CD4-positive, alpha-beta T cell (primary cell): ENCODE measurements at regions of chr3 and their contacts with region 1.

Region 1: GRCh38 chr3:16828815-16829214 is 55.9 kb upstream of the PLCL2 start:
- DNase-seq: peak; percentile 30 to 85 (median 46)
- ATAC-seq: peak; percentile 76
- H3K4me3 ChIP-seq: no peak overlapping the region
- H3K4me3 Mint-ChIP-seq: no peak overlapping the region
- H3K27ac ChIP-seq: no peak overlapping the region
- H3K27ac Mint-ChIP-seq: no peak overlapping the region
- H3K4me1 ChIP-seq: peaks cover 13% of the 10 kb centered on the region
- H3K4me1 Mint-ChIP-seq: peaks cover 28% of the 10 kb centered on the region
- H3K27me3 ChIP-seq: no peaks in the 10 kb centered on the region
- H3K27me3 Mint-ChIP-seq: no peaks in the 10 kb centered on the region
- CTCF ChIP-seq: peak; percentile 58

Region 2: GRCh38 chr3:16600780-16601539 is 227.9 kb before region 1 on chr3:
- CTCF ChIA-PET with region 1: no interaction called
- POLR2A ChIA-PET with region 1: no interaction called
- intact Hi-C with region 1: loop called in 1 of 2 experiments (anchors 10 kb)
- DNase-seq: peak; percentile 69 to 92 (median 81)
- ATAC-seq: peak; percentile 39
- H3K4me3 ChIP-seq: no peak overlapping the region
- H3K4me3 Mint-ChIP-seq: no peak overlapping the region
- H3K27ac ChIP-seq: no peak overlapping the region
- H3K27ac Mint-ChIP-seq: no peak overlapping the region
- H3K4me1 ChIP-seq: no peaks in the 10 kb centered on the region
- H3K4me1 Mint-ChIP-seq: peaks cover 17% of the 10 kb centered on the region
- H3K27me3 ChIP-seq: no peaks in the 10 kb centered on the region
- H3K27me3 Mint-ChIP-seq: no peaks in the 10 kb centered on the region
- CTCF ChIP-seq: peak; percentile 96

Region 3: GRCh38 chr3:16842272-16843270 is 13.8 kb after region 1 on chr3:
- CTCF ChIA-PET with region 1: interaction called, 6 read pairs
- POLR2A ChIA-PET with region 1: interaction called, 30 read pairs
- intact Hi-C with region 1: no loop called
- DNase-seq: peak; percentile 56 to 92 (median 71)
- ATAC-seq: peak; percentile 87
- H3K4me3 ChIP-seq: peak overlapping the region; percentile 50
- H3K4me3 Mint-ChIP-seq: peak overlapping the region; percentile 88
- H3K27ac ChIP-seq: peak overlapping the region; percentile 68 to 92
- H3K27ac Mint-ChIP-seq: peak overlapping the region; percentile 97
- H3K4me1 ChIP-seq: peaks cover 61% of the 10 kb centered on the region
- H3K4me1 Mint-ChIP-seq: peaks cover 89% of the 10 kb centered on the region
- H3K27me3 ChIP-seq: no peaks in the 10 kb centered on the region
- H3K27me3 Mint-ChIP-seq: no peaks in the 10 kb centered on the region
- CTCF ChIP-seq: no peak

Region 4: DNA sequence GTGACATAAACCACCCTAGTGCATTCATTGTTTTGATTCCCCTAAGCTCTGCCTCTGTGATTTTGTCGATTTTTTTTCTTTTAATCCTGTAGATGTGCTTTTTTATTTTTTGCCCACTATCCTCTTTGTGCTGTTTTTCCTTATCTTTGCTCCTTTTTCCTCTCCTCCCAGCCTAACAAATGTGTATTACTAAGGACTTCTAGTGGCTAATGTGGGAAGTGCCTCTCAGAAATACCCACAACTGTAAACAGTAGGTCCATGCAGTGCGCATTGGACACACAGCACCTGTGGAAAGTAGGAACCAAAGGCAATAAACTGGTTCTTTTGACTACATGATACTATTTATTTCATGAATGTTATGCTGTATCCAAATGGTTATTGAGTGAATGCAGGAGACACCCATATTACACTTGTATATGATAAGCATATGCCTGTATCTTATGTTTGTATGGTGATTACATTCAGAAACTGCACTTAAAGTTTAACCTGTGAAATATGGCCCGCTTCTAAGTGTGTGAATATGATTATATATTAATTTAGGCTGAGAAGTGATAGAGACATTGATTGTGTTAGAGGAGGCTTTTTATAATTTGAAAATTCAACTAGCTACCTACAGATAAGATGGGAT is 203.7 kb after region 1 on chr3:
- CTCF ChIA-PET with region 1: no interaction called
- POLR2A ChIA-PET with region 1: no interaction called
- intact Hi-C with region 1: loop called in 1 of 2 experiments (anchors 10 kb)
- DNase-seq: peak in 2 of 14 experiments; percentile 16 to 19
- ATAC-seq: no peak
- H3K4me3 ChIP-seq: no peak overlapping the region
- H3K4me3 Mint-ChIP-seq: no peak overlapping the region
- H3K27ac ChIP-seq: no peak overlapping the region
- H3K27ac Mint-ChIP-seq: no peak overlapping the region
- H3K4me1 ChIP-seq: peaks cover 17% of the 10 kb centered on the region
- H3K4me1 Mint-ChIP-seq: peaks cover 85% of the 10 kb centered on the region
- H3K27me3 ChIP-seq: no peaks in the 10 kb centered on the region
- H3K27me3 Mint-ChIP-seq: no peaks in the 10 kb centered on the region
- CTCF ChIP-seq: peak; percentile 52

Region 5: GRCh38 chr3:17233398-17233800 is 404.6 kb after region 1 on chr3:
- CTCF ChIA-PET with region 1: interaction called, 4 read pairs
- POLR2A ChIA-PET with region 1: interaction called, 7 read pairs
- intact Hi-C with region 1: loop called (anchors 5 kb)
- DNase-seq: peak in 10 of 14 experiments; percentile 1 to 79 (median 24)
- ATAC-seq: peak; percentile 100
- H3K4me3 ChIP-seq: no peak overlapping the region
- H3K4me3 Mint-ChIP-seq: peak overlapping the region; percentile 2
- H3K27ac ChIP-seq: no peak overlapping the region
- H3K27ac Mint-ChIP-seq: peak overlapping the region; percentile 25
- H3K4me1 ChIP-seq: no peaks in the 10 kb centered on the region
- H3K4me1 Mint-ChIP-seq: peaks cover 30% of the 10 kb centered on the region
- H3K27me3 ChIP-seq: no peaks in the 10 kb centered on the region
- H3K27me3 Mint-ChIP-seq: no peaks in the 10 kb centered on the region
- CTCF ChIP-seq: peak; percentile 82